Colonic mucosa (tissue), 4 donors: ENCODE measurements at regions of chr9 and their contacts with region 1.

Region 1: DNA sequence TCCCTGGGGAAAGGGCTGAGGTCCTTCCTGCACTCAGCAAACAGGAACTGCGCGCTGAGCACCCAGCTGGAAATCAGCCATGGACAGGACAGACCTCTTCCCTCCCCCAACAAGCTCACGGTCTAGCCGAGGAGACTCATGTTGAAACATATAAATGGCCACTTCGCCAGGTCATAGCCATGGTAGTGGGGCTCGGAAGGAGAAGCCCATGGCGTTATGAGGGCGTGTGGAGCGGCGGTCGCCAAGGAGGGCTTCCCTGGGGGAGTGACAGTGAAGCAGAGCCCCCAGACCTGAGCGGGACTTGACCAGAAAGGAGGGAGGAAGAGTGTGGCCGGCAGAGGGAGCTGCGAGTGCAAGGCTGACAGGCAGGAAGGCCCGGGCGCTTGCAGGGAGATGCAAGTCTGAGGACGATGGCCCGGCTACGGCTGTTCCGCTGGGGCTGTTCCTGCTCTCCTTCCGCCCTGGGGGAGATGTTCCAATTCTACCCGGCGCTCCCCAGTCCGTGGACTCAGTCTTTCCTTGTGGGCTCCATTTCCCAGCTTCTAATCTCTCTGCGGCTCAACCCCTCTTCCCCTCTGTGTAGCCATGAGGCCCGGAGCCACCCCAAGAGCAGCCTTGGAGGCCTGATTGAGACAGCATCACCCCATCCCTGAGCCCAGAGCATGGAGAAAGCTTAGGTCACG is 43.9 kb upstream of the PRRC2B start:
- DNase-seq: peak; percentile 87
- H3K4me3 ChIP-seq: no peak overlapping the region
- H3K27ac ChIP-seq: no peak overlapping the region
- H3K4me1 ChIP-seq: peaks cover 5% of the 10 kb centered on the region
- H3K27me3 ChIP-seq: no peaks in the 10 kb centered on the region
- CTCF ChIP-seq: peak; percentile 69

Region 2: DNA sequence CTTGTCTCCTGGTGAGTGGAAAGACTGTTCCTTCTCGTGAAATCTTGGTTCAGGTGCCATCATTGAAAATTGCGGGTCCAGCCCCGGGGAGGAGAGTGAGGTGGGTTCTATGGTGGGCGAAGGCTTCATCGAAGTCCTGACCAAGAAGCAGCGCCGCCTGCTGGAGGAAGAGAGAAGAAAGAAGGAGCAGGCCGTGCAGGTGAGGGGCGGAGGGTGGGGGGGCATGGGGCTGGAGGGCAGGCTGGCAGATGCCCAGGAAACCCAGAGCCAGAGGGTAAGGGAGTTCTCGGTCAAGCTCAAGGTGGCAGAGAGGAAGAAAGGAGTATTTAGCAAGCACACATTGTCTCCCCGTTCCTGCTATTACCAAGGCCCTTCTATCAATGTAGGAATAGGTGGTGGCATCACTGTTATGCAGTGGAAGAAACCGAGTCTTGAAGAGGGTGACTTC is 128.4 kb after region 1 on chr9:
- intact Hi-C with region 1: loop called (anchors 2 kb)
- DNase-seq: peak; percentile 33
- H3K4me3 ChIP-seq: no peak overlapping the region
- H3K27ac ChIP-seq: no peak overlapping the region
- H3K4me1 ChIP-seq: no peaks in the 10 kb centered on the region
- H3K27me3 ChIP-seq: no peaks in the 10 kb centered on the region
- CTCF ChIP-seq: peak; percentile 32

Region 3: GRCh38 chr9:131608493-131609037 is 258.5 kb after region 1 on chr9:
- intact Hi-C with region 1: no loop called
- DNase-seq: no peak
- H3K4me3 ChIP-seq: no peak overlapping the region
- H3K27ac ChIP-seq: peak overlapping the region; percentile 1
- H3K4me1 ChIP-seq: no peaks in the 10 kb centered on the region
- H3K27me3 ChIP-seq: no peaks in the 10 kb centered on the region
- CTCF ChIP-seq: no peak

Region 4: DNA sequence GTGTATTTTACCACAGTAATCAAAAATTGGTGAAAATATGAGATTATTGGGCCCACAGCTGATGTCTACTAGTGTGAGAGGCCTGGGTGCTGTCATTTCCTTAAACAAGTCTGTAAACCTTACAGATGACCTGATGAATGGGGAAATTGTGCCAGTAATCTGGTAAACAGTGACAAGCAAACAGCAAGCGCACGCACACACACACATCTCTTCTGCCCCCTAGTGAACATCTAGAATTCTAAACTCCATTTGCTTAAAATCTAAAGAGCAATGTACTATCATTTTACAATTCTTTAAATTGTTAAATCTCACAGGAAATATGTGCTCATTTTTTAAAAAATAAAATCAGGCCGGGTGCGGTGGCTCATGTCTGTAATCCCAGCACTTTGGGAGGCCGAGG is 397.3 kb after region 1 on chr9:
- intact Hi-C with region 1: loop called (anchors 5 kb)
- DNase-seq: no peak
- H3K4me3 ChIP-seq: no peak overlapping the region
- H3K27ac ChIP-seq: no peak overlapping the region
- H3K4me1 ChIP-seq: no peaks in the 10 kb centered on the region
- H3K27me3 ChIP-seq: no peaks in the 10 kb centered on the region
- CTCF ChIP-seq: no peak